GM18951 (cell line): ENCODE measurements at regions of chr3 and their contacts with region 1.

Region 1: DNA sequence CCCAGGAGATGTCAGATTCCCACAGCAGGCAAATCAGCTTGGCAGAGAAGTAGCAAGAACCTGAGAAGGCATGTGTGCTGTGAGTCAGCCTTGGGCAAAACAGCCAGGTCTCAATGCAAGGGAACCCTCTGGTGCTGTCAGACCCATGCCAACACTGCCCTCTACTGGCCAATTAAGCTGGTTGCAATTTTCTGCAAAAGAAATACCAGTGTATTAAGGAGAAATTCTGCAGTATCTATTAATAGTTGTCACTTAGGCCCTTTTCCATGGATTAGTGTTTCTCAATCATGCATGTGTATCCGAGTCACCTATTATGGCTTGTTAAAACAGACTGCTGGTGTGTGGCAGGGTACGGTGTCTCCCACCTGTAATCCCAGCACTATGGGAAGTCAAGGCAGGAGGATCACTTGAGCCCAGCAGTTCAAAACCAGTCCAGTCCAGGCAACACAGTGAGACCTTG is 26.2 kb downstream of the MAP4 start:
- POLR2A ChIP-seq: no peak

Region 2: GRCh38 chr3:47824541-47825473 is 165.2 kb before region 1 on chr3:
- in situ Hi-C with region 1: loop called (anchors 5 kb)
- POLR2A ChIP-seq: peak; percentile 85

Region 3: GRCh38 chr3:49112262-49112661 is 1122.3 kb after region 1 on chr3:
- in situ Hi-C with region 1: no loop called
- POLR2A ChIP-seq: no peak